WTC11 (cell line): ENCODE measurements at regions of chr11 and their contacts with region 1.

Region 1: DNA sequence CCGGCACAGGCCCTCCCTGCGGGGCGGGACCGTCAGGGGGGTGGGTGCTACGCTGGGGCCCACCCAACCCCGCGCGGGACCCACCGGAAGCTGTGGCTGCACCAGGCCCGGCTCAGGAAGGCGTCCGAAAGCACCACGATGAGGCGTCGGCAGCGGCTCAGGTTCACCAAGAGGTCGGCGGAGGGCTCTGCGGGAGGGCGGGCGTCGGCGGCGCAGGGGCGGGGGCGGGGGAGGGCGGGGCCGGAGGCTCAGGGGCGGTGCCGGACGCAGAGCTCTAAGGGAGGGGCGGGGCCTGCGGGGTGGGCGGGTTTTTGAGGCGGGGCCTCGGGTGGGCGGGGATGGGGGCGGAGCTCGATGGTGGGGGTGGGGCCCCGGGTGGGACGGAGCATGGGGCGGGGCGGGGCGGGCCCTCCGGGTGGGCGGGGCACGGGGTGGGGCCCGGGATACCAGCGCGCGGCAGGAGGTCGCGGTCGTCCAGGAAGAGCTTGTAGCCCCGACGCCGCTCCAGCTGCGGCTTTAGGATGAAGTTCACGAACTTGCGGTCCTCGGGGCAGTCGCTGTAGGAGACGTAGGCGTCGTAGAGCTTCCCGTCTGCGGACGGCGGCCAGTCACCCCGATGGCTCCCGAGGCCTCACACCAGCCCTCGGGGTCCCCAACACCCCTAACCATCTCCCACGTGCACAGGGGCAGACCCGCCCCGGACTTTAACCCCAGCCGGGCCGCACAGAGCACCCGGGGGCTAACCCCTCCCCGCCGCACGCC is 7.6 kb downstream of the SIGIRR start:
- DNase-seq: peak; percentile 81
- ATAC-seq: peak; percentile 52
- H3K4me3 Mint-ChIP-seq: peak overlapping the region; percentile 30; the same call in 1 of the 2 replicates
- H3K27ac Mint-ChIP-seq: no peak overlapping the region
- H3K4me1 Mint-ChIP-seq: no peaks in the 10 kb centered on the region
- H3K27me3 Mint-ChIP-seq: no peaks in the 10 kb centered on the region
- CTCF ChIP-seq: no peak

Region 2: DNA sequence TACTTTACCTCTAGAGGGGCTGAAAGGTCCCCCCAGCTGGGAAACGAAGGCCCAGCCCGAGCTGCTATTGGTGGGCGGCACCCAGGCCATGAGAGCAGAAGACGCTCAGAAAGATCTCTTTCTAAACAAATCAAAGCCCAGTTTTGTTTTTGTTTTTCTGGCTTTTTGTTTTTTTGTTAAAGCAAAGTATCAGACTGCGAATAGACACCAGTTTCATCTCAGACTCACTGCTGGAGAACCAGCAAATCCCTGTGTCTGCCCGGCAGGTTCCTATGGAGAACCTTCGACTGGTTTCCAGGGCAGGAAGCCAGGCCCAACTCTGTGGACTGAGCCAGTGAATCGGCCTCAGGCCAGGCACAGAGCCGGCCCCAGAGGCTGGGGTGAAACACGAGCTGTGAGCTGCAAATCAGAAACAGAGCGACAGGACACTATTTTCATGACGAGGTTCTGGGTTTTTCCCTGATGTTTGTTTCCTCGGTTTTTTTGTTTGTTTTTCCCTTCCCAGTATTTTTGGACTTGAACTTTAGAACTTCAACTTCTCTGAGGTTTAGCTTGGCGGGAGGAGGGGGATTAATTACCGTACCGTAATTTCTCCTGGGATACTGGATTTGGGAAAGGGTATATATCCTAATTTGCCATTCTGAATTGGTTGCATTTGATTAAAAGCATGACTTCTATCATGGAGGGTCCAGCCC is 53.8 kb before region 1 on chr11:
- CTCF ChIA-PET with region 1: no interaction called
- POLR2A ChIA-PET with region 1: no interaction called
- DNase-seq: no peak
- ATAC-seq: peak; percentile 46
- H3K4me3 Mint-ChIP-seq: no peak overlapping the region
- H3K27ac Mint-ChIP-seq: peak overlapping the region; percentile 80
- H3K4me1 Mint-ChIP-seq: peaks cover 38% of the 10 kb centered on the region
- H3K27me3 Mint-ChIP-seq: peaks cover 5% of the 10 kb centered on the region
- CTCF ChIP-seq: no peak

Region 3: DNA sequence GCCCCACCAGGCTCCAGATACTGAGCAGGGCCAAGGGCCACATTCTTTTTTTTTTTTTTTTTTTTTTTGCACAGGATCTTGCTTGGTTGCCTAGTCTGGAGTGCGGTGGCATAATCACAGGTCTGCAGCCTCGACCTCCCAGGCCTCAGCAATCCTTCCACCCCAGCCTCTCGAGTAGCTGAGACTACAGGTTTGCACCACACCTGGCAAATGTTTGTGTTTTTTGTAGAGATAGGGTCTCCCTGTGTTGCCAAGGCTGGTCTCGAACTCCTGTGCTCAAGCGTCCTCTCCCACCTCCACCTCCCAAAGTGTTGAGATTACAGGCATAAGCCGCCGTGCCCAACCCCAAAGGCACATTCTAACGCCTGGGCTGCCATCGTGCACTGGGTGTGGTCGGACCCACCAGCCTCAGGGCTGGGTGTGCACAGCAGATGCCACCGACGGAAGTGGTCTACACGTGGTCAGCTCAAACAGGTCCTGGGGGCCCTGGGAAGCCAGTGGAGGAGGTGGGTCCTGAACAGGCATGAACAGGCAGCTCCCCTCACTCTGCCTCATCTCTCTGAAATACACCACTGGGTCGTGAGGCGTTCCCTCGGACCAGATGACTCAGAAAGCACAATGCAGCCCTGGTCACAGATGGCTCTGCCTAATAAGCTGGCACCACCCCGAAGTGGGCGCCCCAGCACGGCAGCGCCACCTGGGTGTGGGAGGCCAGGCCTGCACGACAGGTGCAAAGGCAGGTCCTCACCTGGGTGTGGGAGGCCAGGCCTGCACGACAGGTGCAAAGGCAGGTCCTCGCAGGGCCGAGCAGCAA is 43.0 kb before region 1 on chr11:
- CTCF ChIA-PET with region 1: interaction called, 12 read pairs
- POLR2A ChIA-PET with region 1: no interaction called
- DNase-seq: peak; percentile 82
- ATAC-seq: peak; percentile 84
- H3K4me3 Mint-ChIP-seq: no peak overlapping the region
- H3K27ac Mint-ChIP-seq: no peak overlapping the region
- H3K4me1 Mint-ChIP-seq: peaks cover 17% of the 10 kb centered on the region
- H3K27me3 Mint-ChIP-seq: peaks cover 23% of the 10 kb centered on the region
- CTCF ChIP-seq: peak; percentile 44

Region 4: DNA sequence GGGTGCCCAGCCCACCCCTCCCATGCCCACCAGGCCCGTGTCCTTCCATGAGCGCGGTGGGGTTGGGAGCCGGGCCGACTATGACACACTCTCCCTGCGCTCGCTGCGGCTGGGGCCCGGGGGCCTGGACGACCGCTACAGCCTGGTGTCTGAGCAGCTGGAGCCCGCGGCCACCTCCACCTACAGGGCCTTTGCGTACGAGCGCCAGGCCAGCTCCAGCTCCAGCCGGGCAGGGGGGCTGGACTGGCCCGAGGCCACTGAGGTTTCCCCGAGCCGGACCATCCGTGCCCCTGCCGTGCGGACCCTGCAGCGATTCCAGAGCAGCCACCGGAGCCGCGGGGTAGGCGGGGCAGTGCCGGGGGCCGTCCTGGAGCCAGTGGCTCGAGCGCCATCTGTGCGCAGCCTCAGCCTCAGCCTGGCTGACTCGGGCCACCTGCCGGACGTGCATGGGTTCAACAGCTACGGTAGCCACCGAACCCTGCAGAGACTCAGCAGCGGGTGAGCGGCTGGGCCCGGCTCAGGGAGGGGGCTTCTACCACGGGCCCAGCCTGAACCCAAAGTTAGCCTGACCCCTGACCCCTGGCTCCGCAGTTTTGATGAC is 10.1 kb before region 1 on chr11:
- CTCF ChIA-PET with region 1: interaction called, 12 read pairs
- POLR2A ChIA-PET with region 1: interaction called, 3 read pairs
- DNase-seq: no peak
- ATAC-seq: no peak
- H3K4me3 Mint-ChIP-seq: no peak overlapping the region
- H3K27ac Mint-ChIP-seq: no peak overlapping the region
- H3K4me1 Mint-ChIP-seq: peaks cover 6% of the 10 kb centered on the region
- H3K27me3 Mint-ChIP-seq: peaks cover 8% of the 10 kb centered on the region
- CTCF ChIP-seq: no peak